PC-3 (cell line): ENCODE measurements at regions of chr2 and their contacts with region 1.

Region 1: DNA sequence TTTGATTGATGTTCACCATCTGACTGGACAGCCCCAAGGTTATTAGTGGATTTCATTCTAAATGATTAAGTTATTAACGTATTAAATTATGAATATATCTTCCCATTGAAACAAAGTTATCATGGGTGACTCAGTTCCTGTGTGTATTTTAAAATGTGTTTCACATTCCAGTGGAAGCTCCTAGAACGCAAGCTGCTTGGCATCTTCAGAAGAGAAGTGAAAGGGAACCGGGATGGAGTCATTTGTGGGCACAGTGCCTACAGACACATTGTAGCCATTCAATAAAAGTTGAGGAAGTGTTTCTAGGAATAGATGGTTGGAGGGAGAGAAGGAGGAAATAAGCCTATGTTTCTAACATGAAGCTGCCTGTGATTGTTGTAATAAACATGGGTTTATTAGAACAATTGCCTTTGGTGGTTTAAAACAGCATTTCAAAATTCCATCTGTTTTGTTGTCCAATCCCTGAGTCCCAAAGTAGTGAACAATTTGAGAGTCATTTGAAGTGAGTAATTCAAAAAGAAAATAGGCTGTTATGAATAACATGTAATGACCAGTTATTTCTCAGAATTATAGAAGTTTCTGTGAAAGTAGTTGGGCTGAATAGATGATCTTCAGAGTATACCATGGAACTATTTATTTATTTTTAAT is 143.5 kb downstream of the PKP4 start:
- DNase-seq: peak; percentile 94
- ATAC-seq: peak; percentile 94
- H3K4me3 ChIP-seq: peak overlapping the region; percentile 28; the same call in 1 of the 2 replicates
- H3K27ac ChIP-seq: peak overlapping the region; percentile 76
- H3K4me1 ChIP-seq: peaks cover 27% of the 10 kb centered on the region
- H3K27me3 ChIP-seq: no peaks in the 10 kb centered on the region
- CTCF ChIP-seq: no peak

Region 2: DNA sequence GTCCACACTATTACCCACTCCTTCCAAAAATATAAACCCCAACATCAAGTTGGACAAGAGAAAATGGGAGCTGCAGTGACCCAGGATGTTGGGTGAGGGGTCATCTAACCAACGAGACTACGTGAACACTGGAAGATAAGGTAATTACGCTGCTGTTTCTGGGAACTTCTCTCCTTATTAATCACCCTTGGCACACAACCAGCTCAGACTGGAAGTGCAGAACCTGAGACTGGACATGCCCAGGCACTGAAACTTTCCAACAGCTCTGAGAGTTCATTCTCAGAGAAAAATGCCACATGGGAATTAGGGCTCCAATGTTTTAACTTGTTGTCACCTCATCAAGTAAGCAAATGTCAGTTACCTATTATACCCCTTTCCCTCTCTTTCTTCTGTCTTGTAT is 279.0 kb before region 1 on chr2:
- CTCF ChIA-PET with region 1: no interaction called
- POLR2A ChIA-PET with region 1: no interaction called
- intact Hi-C with region 1: no loop called
- DNase-seq: peak; percentile 35
- ATAC-seq: no peak
- H3K4me3 ChIP-seq: no peak overlapping the region
- H3K27ac ChIP-seq: no peak overlapping the region
- H3K4me1 ChIP-seq: peaks cover 2% of the 10 kb centered on the region; the same call in 1 of the 2 replicates
- H3K27me3 ChIP-seq: 0 out of 2 replicates have a peak, but pooled peaks cover 4% of the 10 kb centered on the region
- CTCF ChIP-seq: no peak

Region 3: DNA sequence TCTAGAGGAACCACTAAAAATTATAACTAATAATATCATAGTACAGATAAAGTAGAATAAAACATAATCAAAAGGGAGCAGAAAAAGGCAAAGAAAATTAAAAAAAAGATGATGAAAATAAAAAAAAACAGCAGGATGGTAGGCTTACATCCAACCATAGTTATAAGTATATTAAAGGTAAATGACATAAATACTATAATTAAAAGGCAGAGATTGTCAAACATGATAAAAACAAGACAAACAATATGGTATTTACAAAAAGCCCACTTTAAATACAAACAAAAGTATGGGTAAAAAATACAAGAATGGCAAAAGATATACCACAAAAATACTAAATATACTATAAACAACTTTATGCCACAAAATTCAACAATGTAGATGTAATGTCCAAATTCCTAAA is 168.2 kb before region 1 on chr2:
- CTCF ChIA-PET with region 1: no interaction called
- POLR2A ChIA-PET with region 1: no interaction called
- intact Hi-C with region 1: no loop called
- DNase-seq: no peak
- ATAC-seq: no peak
- H3K4me3 ChIP-seq: no peak overlapping the region
- H3K27ac ChIP-seq: no peak overlapping the region
- H3K4me1 ChIP-seq: no peaks in the 10 kb centered on the region
- H3K27me3 ChIP-seq: no peaks in the 10 kb centered on the region
- CTCF ChIP-seq: no peak

Region 4: GRCh38 chr2:158443612-158444011 is 156.7 kb before region 1 on chr2:
- CTCF ChIA-PET with region 1: no interaction called
- POLR2A ChIA-PET with region 1: no interaction called
- intact Hi-C with region 1: no loop called
- DNase-seq: no peak
- ATAC-seq: no peak
- H3K4me3 ChIP-seq: no peak overlapping the region
- H3K27ac ChIP-seq: no peak overlapping the region
- H3K4me1 ChIP-seq: no peaks in the 10 kb centered on the region
- H3K27me3 ChIP-seq: no peaks in the 10 kb centered on the region
- CTCF ChIP-seq: no peak

Region 5: DNA sequence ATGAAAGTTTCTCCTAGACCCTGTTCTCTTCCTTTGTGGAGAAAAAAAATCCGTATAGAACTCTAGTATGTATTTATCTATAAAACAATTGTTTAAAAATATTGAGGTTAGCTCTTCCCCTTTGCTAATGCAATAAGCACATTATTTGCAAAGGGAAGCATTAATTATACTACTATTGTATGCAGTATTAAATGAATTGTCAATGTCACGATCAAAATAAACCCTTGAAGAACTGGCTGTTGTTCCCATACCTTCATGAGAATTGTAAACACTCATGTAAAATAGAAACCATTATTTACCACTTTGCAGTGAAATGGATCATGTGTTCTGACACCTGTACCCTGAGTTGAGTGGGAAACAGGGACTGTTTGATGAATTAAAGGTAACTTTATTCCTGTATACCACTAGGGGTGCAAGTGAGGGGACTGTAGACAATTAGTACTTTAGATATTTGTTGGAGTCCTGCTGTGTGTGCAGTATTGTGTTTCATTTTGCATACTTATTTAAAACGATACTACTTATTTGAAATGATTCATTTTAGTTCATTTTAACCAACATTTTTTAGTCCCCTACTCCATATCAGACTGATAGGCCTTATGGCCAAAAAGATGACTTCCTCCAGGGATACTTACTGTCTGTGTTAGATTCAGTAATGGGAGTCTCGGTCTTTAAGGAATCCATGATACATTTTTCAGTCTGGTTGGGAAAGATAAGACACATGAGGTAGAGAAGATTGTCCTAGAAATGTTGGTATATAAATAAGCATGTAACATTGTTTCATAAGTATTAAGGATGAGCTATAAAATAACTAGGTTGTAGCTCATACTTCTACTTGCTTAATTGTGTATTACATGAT is 135.6 kb before region 1 on chr2:
- CTCF ChIA-PET with region 1: no interaction called
- POLR2A ChIA-PET with region 1: no interaction called
- intact Hi-C with region 1: loop called (anchors 5 kb)
- DNase-seq: peak; percentile 39
- ATAC-seq: peak; percentile 49; the same call in 1 of the 2 replicates
- H3K4me3 ChIP-seq: no peak overlapping the region
- H3K27ac ChIP-seq: no peak overlapping the region
- H3K4me1 ChIP-seq: peaks cover 17% of the 10 kb centered on the region
- H3K27me3 ChIP-seq: no peaks in the 10 kb centered on the region
- CTCF ChIP-seq: peak; percentile 78

Region 6: GRCh38 chr2:158539176-158540005 is 60.9 kb before region 1 on chr2:
- CTCF ChIA-PET with region 1: no interaction called
- POLR2A ChIA-PET with region 1: no interaction called
- intact Hi-C with region 1: loop called (anchors 2 kb)
- DNase-seq: peak; percentile 96
- ATAC-seq: peak; percentile 89
- H3K4me3 ChIP-seq: no peak overlapping the region
- H3K27ac ChIP-seq: peak overlapping the region; percentile 49
- H3K4me1 ChIP-seq: peaks cover 17% of the 10 kb centered on the region
- H3K27me3 ChIP-seq: no peaks in the 10 kb centered on the region
- CTCF ChIP-seq: no peak

Region 7: GRCh38 chr2:158586491-158586890 is 13.8 kb before region 1 on chr2:
- CTCF ChIA-PET with region 1: no interaction called
- POLR2A ChIA-PET with region 1: no interaction called
- intact Hi-C with region 1: loop called (anchors 2 kb)
- DNase-seq: peak; percentile 83
- ATAC-seq: peak; percentile 94
- H3K4me3 ChIP-seq: no peak overlapping the region
- H3K27ac ChIP-seq: no peak overlapping the region
- H3K4me1 ChIP-seq: peaks cover 18% of the 10 kb centered on the region
- H3K27me3 ChIP-seq: no peaks in the 10 kb centered on the region
- CTCF ChIP-seq: no peak

Region 8: DNA sequence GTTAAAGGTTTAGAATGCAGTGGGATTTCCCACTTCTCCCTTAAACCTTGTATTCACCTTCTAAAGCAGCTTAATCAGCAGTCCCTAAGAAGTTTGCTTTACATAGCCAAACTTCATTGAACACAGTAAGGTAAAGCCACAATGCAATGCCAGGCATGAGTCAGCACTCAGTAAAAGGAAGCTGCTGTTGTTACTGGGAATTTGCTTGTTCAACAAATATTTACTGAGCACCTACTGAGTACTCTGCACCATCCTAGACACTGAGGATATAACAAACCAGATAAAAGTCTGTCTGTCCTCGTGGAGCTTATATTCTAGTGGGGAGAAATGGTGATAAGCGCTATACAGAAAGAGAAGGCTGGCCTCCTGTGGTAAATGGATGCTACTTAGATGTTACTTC is 19.2 kb after region 1 on chr2:
- CTCF ChIA-PET with region 1: no interaction called
- POLR2A ChIA-PET with region 1: interaction called, 17 read pairs
- intact Hi-C with region 1: no loop called
- DNase-seq: peak; percentile 75
- ATAC-seq: peak; percentile 98
- H3K4me3 ChIP-seq: no peak overlapping the region
- H3K27ac ChIP-seq: peak overlapping the region; percentile 56
- H3K4me1 ChIP-seq: peaks cover 12% of the 10 kb centered on the region
- H3K27me3 ChIP-seq: no peaks in the 10 kb centered on the region
- CTCF ChIP-seq: no peak

Region 9: DNA sequence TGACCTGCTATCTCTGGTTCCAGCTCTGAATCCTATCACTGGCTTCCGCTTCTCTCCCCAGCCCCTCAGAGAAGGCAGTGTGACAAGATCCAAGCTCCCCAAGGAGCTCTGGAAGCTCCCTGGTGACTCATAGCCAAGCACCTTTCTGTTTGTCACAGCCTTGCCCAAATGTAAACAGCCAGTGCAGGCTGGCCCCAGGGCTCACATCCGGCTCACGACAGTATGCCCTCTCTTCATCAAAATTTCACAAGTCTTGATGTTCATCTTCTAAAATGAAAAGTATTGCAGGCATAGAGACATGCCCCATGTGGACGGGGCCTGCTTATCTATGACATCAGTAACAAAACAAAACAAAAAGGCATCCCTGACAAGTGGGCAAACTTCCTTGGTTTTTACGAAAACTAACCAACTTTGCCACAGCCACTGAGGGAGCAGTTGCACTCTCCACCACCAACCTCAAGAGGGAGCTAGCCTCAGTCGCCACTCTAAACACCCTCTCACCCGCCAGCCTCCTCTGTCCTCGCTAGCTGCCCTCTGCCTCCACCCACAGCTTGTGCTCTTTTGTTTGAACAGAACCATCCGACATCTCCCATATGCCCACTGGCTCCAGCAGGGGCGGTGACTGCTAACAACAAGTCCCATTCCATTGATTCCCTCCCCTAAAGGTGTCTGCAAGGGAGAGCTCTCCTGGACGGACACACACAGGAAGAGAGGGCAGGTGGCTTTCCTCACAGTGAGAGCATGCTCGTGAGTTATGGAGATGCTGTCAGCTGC is 123.8 kb after region 1 on chr2:
- CTCF ChIA-PET with region 1: no interaction called
- POLR2A ChIA-PET with region 1: no interaction called
- intact Hi-C with region 1: loop called (anchors 2 kb)
- DNase-seq: peak; percentile 94
- ATAC-seq: peak; percentile 77
- H3K4me3 ChIP-seq: peak overlapping the region; percentile 61
- H3K27ac ChIP-seq: peak overlapping the region; percentile 98
- H3K4me1 ChIP-seq: peaks cover 40% of the 10 kb centered on the region
- H3K27me3 ChIP-seq: no peaks in the 10 kb centered on the region
- CTCF ChIP-seq: peak; percentile 78